ENCODE measurements at regions of chr2 and their contacts with region 1.

Region 1: DNA sequence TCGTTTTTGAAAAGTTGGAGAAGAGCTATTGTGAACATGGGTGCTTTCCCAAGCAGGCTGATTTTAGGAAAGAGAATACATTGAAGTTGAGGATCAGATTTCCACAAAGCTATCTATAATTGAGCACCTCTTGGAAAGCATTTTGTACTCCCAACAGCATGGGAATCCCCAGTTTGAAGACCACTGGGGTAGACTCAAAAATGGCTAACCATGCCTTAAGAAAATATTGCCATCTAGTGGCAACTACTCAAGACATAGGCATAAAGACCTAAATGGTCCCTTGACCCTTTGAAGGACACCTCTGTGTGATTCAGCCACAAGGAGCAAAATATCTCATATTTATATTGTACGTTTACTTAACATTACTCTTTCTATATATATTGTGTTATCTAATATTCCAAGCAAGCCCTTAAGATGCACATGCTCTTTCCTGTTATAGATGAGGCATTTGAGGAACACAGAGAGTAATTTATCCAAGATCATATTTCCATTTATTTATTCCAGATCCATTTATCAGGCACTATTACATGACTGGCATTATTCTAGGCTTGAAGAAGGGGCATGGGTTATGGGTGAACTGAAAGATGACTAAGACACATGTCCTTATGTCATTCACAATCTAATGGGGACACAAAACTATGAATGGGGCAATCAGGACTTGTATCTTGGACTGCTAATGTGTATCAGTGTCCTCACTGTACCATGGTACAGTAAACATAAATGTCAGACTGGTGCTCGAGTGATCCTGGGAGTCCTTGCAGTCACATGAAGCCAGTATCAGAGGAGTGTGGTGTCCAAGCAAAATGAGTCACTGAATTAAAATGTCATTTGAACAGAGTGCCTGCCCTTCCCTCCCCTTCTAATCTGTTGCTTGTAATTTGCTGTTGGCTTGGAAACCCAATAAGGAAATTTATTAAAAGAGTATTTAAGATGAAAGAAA is 121.0 kb upstream of the XPO1 start:
- DNase-seq: peak; percentile 27
- ATAC-seq: peak; percentile 98
- H3K4me3 ChIP-seq: no peak overlapping the region
- H3K27ac ChIP-seq: no peak overlapping the region
- H3K4me1 ChIP-seq: no peaks in the 10 kb centered on the region
- H3K27me3 ChIP-seq: no peaks in the 10 kb centered on the region
- CTCF ChIP-seq: peak; percentile 48 to 67 (median 60); a peak in 5 of 6 replicates
- EP300 ChIP-seq: no peak
- POLR2A ChIP-seq: no peak
- RAD21 ChIP-seq: peak; percentile 89

Region 2: DNA sequence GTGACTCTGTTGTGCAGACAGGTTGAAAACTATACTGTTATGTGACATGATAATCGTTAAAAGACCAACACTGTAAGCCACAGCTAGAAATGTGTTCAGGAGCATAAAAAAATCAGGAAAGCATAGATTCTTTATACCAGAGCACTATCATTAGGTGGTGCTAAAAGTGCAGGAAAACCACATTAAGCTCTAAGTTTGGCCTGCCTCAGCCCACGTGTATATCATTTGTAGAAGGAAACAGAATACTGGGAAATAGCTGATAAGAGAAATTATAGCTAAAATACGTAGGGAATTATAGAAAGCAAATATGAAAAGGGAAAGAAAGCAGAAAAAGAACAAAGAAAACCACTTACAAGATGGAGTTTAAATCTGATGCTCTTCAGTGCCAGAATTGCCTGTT is 523.6 kb before region 1 on chr2:
- CTCF ChIA-PET with region 1: interaction called, 12 read pairs
- POLR2A ChIA-PET with region 1: no interaction called
- RAD21 ChIA-PET with region 1: no interaction called
- SMC1A ChIA-PET with region 1: interaction called, 7 read pairs
- in situ Hi-C with region 1: no loop called
- intact Hi-C with region 1: no loop called
- DNase-seq: no peak
- ATAC-seq: peak; percentile 52; the same call in 2 of the 3 replicates
- H3K4me3 ChIP-seq: no peak overlapping the region
- H3K27ac ChIP-seq: no peak overlapping the region
- H3K4me1 ChIP-seq: no peaks in the 10 kb centered on the region
- H3K27me3 ChIP-seq: no peaks in the 10 kb centered on the region
- CTCF ChIP-seq: peak in 2 of 3 experiments; percentile 9 to 46; a peak in 1 of 6 replicates
- EP300 ChIP-seq: no peak
- POLR2A ChIP-seq: no peak
- RAD21 ChIP-seq: peak; percentile 34; the same call in 1 of the 2 replicates

Region 3: DNA sequence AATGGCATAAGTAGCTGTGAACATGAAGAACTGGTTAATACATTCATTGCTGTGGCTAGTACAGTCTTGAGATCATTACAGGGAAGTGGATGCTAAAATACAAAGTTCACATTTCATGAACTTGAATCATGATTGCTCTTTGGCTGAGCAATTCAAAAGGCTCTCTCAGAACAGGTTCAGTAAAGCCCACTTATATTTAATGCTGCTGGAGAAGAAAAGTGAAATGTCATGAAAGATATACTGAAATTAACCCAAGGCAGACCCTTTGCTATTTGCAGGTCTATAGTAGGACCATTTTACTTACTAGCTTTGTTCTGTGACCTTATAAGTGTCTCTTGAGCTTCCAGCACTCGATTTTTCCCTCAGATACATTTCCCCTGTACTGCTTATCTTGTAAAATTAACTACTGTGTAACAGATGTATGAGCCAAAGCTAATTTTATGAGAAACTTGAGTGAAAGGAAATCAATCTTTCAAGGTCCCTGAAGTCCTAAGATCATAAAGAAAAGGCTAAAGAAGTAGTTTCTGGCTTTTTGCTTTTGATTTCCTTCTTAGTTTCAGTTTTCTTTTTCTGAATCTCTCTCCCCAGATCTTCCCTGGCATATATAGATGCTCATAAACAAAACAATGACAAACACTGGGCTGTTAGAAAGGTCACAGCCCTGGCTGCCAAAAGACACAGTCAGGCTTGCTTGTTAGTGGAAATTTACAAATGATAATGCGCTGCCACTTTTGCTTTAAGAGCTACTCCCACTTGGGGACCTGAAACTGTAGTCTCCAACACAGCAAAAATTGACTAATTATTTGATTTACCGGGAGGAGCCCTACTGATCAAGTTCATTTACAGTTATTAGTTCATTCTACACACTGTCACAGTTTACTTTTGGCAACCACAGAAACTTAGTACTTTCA is 11.7 kb after region 1 on chr2:
- CTCF ChIA-PET with region 1: interaction called, 46 read pairs
- POLR2A ChIA-PET with region 1: interaction called, 5 read pairs
- RAD21 ChIA-PET with region 1: interaction called, 26 read pairs
- SMC1A ChIA-PET with region 1: interaction called, 14 read pairs
- in situ Hi-C with region 1: no loop called
- intact Hi-C with region 1: no loop called
- DNase-seq: peak; percentile 46
- ATAC-seq: peak; percentile 89
- H3K4me3 ChIP-seq: peak overlapping the region; percentile 56
- H3K27ac ChIP-seq: peak overlapping the region; percentile 82
- H3K4me1 ChIP-seq: peaks cover 16% of the 10 kb centered on the region; the same call in 1 of the 2 replicates
- H3K27me3 ChIP-seq: no peaks in the 10 kb centered on the region
- CTCF ChIP-seq: no peak
- EP300 ChIP-seq: no peak
- POLR2A ChIP-seq: no peak
- RAD21 ChIP-seq: no peak

Region 4: DNA sequence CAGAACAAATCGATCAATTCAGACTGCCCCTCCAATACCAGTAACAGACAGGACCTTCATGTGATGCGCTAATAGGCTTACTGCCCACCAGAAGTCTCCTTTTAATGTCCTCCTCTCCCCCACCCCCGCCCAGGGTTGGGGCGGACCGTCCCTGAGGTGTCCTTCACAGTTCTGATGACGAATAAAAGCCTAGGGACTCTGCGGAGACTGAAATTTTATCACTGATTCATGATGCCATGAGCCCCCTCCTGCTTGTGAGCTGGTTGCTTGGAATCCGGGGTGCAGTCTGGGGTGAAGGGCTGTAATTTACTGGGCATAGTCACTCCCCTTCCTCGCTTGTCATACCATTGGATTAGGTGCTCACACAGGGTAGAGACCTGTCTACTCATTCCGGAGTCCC is 579.1 kb after region 1 on chr2:
- CTCF ChIA-PET with region 1: no interaction called
- POLR2A ChIA-PET with region 1: no interaction called
- RAD21 ChIA-PET with region 1: no interaction called
- SMC1A ChIA-PET with region 1: no interaction called
- in situ Hi-C with region 1: no loop called
- intact Hi-C with region 1: no loop called
- DNase-seq: no peak
- ATAC-seq: no peak
- H3K4me3 ChIP-seq: no peak overlapping the region
- H3K27ac ChIP-seq: no peak overlapping the region
- H3K4me1 ChIP-seq: no peaks in the 10 kb centered on the region
- H3K27me3 ChIP-seq: no peaks in the 10 kb centered on the region
- CTCF ChIP-seq: no peak
- EP300 ChIP-seq: no peak
- POLR2A ChIP-seq: no peak
- RAD21 ChIP-seq: no peak

Region 5: GRCh38 chr2:63189026-63189425 is 1529.9 kb after region 1 on chr2:
- CTCF ChIA-PET with region 1: no interaction called
- POLR2A ChIA-PET with region 1: no interaction called
- RAD21 ChIA-PET with region 1: no interaction called
- SMC1A ChIA-PET with region 1: no interaction called
- in situ Hi-C with region 1: no loop called
- intact Hi-C with region 1: no loop called
- DNase-seq: peak; percentile 12
- ATAC-seq: peak; percentile 99
- H3K4me3 ChIP-seq: no peak overlapping the region
- H3K27ac ChIP-seq: no peak overlapping the region
- H3K4me1 ChIP-seq: no peaks in the 10 kb centered on the region; the same call in 1 of the 2 replicates
- H3K27me3 ChIP-seq: no peaks in the 10 kb centered on the region
- CTCF ChIP-seq: peak; percentile 80 to 92 (median 83)
- EP300 ChIP-seq: no peak
- POLR2A ChIP-seq: no peak
- RAD21 ChIP-seq: peak; percentile 63